WTC11 (cell line): ENCODE measurements at regions of chr1 and their contacts with region 1.

Region 1: DNA sequence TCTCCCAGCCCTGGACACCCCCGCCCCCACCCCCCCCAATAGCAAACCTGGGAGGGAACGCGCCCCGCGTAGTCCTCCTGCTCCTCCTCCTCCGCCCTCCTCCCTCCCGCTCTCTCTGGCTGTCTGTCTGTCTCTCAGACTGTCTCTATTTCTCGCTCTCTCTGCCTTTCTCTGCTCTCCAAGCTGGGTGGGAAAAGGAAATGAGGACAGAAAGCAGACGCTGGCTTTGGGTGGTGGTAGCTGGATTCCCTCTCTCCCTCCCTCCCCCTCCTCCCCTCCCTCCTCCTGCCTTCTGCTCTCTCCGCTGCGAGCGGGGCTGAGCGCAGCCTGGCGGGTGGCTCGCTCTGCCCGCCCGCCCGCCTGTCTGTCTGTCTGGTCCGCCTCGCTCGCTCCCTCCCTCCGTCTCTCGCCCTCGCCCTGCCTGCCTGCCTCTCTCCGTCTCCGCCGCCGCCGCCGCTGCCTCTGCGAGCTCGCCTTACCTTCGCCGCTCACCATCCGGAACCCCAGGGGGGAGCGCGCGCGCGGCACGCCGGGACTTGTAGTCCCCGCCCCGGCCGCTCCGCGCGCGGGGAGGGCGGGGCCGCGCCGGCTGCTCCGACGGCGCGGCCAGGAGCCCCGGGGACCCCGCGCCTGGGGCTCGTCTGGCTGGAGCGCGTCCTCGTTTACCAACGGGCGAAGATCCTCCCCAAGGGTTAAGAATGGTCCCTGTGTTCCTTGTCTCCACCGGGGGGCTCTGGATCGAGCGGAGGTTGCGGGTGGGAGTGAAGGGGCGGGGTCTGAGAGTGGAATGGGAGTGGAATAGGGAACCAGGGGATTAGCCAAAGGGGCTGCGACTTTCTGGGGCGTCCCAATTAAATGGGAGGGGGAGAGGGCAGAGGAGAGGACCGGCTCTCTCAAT is at the start of gene AHDC1:
- DNase-seq: peak; percentile 96
- ATAC-seq: peak; percentile 11
- H3K4me3 Mint-ChIP-seq: peak within 1 kb of the TSS; percentile 92
- H3K27ac Mint-ChIP-seq: peak within 1 kb of the TSS; percentile 88
- H3K4me1 Mint-ChIP-seq: peaks cover 61% of the 10 kb centered on the region
- H3K27me3 Mint-ChIP-seq: no peaks in the 10 kb centered on the region; the same call in 1 of the 2 replicates
- CTCF ChIP-seq: no peak
- total RNA-seq, gene AHDC1: 31.6 to 49.0 TPM (median 32.6 TPM) in 3 replicates

Region 2: DNA sequence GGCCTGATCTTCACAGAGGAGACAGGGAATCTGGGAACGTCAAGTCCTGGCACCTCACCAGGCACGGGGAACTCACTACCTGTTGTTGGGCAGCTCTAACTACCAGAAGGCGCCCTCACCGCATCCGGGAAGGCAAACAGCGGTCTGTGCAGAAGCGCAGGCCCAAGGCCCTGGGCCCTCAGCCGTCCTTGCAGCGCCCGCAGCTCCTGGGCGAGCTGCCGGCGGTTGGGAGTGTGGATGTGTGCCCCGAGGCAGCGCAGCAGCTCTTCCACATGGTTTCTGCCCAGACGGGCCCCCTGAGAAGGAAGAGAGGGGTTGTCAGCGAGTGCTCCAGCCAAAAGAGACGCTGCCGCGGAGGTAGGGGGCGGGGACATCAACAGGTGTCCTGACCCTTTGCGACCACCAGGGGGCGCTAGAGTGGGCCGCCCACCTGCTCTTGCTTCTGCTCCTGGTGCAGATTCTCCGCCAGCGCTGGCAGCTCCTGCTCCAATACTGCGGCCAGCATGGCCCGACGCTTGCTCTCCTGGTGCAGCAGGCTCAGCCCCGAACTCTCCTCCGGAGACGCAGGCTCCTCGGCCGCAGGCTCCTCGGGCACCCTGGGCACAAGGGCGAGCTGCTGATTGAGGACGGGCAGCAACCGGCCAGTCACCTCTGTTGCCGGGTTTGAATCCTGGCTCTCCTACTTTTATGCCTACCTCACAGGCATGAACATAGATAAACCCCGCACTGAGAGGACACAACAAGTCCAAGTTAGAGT is 246.5 kb before region 1 on chr1:
- CTCF ChIA-PET with region 1: interaction called, 27 read pairs
- POLR2A ChIA-PET with region 1: no interaction called
- DNase-seq: peak; percentile 87
- ATAC-seq: peak; percentile 70
- H3K4me3 Mint-ChIP-seq: peak overlapping the region; percentile 37
- H3K27ac Mint-ChIP-seq: no peak overlapping the region
- H3K4me1 Mint-ChIP-seq: peaks cover 17% of the 10 kb centered on the region
- H3K27me3 Mint-ChIP-seq: peaks cover 49% of the 10 kb centered on the region
- CTCF ChIP-seq: peak; percentile 100

Region 3: DNA sequence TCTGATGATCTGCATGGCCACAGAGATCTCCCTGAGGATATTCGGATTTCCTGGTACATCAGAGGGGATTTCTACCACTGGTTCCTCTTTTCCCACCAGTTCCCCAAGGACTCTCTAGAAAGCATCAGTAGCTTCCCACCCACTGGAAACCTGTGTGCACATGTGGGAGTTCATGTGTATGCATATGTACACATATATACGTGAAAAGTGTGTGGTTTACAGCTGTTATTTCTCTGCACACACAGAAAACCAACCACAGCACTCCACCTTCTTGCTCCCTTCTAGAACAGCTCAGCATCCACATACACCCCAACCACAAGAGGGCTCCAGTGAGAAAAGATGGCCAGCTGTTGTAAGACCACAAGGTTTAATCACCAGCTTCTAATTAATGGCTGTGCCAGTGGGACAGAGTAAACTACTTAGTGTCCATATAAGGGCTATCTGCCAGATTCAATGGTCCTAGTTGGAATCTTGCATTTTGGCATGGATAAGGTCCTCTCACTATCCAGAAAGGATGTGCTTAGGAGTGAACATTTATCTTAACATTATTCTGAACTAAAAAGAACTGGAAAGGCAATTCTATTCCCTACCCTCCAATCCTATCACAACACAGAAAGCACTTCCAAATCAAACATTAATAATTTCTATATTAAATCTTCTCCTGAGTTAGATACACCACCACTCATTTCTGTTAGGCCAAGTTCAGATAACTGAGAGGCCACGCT is 187.4 kb before region 1 on chr1:
- CTCF ChIA-PET with region 1: interaction called, 67 read pairs
- POLR2A ChIA-PET with region 1: interaction called, 4 read pairs
- DNase-seq: no peak
- ATAC-seq: peak; percentile 67
- H3K4me3 Mint-ChIP-seq: no peak overlapping the region
- H3K27ac Mint-ChIP-seq: peak overlapping the region; percentile 50; the same call in 1 of the 2 replicates
- H3K4me1 Mint-ChIP-seq: peaks cover 41% of the 10 kb centered on the region
- H3K27me3 Mint-ChIP-seq: no peaks in the 10 kb centered on the region
- CTCF ChIP-seq: 0 out of 2 replicates have a peak, but pooled peaks have one; percentile 1

Region 4: GRCh38 chr1:27536767-27537166 is 67.2 kb before region 1 on chr1:
- CTCF ChIA-PET with region 1: interaction called, 46 read pairs
- POLR2A ChIA-PET with region 1: no interaction called
- DNase-seq: peak; percentile 59
- ATAC-seq: peak; percentile 70
- H3K4me3 Mint-ChIP-seq: no peak overlapping the region
- H3K27ac Mint-ChIP-seq: peak overlapping the region; percentile 49; the same call in 1 of the 2 replicates
- H3K4me1 Mint-ChIP-seq: peaks cover 61% of the 10 kb centered on the region
- H3K27me3 Mint-ChIP-seq: no peaks in the 10 kb centered on the region
- CTCF ChIP-seq: no peak

Region 5: DNA sequence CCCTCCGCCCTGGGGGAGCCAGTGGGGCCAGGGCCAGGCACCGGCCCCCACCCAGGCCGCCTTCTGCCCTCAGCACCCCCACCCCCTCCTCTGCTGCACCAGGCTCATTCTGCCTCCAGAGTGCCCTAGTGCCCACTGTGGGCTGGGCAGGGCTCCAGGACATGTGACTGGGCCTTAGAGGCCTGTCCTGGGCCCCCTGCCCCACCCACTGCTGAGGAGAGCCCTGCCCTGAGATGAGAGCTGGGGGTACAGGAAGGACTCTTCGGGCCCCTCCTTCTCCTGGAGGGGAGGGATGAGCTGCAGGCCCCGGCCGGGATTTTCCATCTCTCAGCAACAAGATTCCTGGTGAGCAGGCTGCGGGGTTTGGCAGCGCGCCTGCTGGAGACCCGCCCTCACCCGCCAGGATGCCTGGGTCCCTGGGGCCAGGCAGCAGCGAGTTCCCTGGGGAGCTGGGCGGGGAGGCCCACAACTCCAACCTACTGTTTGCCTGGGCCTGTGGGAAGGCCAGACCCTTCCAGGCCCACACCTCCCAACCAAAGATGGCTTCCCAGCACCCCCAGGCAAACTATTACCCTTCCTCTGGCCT is 14.0 kb before region 1 on chr1:
- CTCF ChIA-PET with region 1: interaction called, 43 read pairs
- POLR2A ChIA-PET with region 1: no interaction called
- DNase-seq: no peak
- ATAC-seq: no peak
- H3K4me3 Mint-ChIP-seq: no peak overlapping the region
- H3K27ac Mint-ChIP-seq: no peak overlapping the region
- H3K4me1 Mint-ChIP-seq: peaks cover 12% of the 10 kb centered on the region
- H3K27me3 Mint-ChIP-seq: no peaks in the 10 kb centered on the region
- CTCF ChIP-seq: no peak

Region 6: GRCh38 chr1:27662707-27663393 is 58.9 kb after region 1 on chr1:
- CTCF ChIA-PET with region 1: interaction called, 367 read pairs
- POLR2A ChIA-PET with region 1: interaction called, 6 read pairs
- DNase-seq: peak; percentile 95
- ATAC-seq: peak; percentile 81
- H3K4me3 Mint-ChIP-seq: no peak overlapping the region
- H3K27ac Mint-ChIP-seq: peak overlapping the region; percentile 75
- H3K4me1 Mint-ChIP-seq: peaks cover 29% of the 10 kb centered on the region
- H3K27me3 Mint-ChIP-seq: peaks cover 3% of the 10 kb centered on the region; the same call in 1 of the 2 replicates
- CTCF ChIP-seq: peak; percentile 91